ENCODE measurements at regions of chr7 and their contacts with region 1.

Region 1: GRCh38 chr7:89943525-89944050 is 210.7 kb upstream of the STEAP1 start:
- DNase-seq: no peak

Region 2: DNA sequence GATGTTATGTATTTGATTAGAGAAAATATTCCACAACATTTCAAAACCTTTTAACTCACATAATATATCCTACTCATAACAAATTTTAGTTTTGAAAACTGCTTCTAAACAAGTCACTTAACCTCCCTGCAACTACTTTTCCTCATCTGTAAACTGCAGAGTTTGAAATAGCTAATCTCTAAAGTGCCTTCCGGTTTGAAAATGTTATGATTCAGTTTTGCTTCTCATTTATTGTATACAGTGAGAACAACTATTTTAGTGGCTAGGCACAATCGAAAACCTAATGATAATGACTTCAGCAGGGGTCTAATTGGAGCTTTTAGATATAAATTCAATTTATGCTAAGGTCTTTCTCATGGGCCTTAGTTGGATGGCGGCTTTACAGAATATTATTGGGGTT is 1117.4 kb before region 1 on chr7:
- intact Hi-C with region 1: loop called in 1 of 2 experiments (anchors 5 kb)
- DNase-seq: no peak

Region 3: DNA sequence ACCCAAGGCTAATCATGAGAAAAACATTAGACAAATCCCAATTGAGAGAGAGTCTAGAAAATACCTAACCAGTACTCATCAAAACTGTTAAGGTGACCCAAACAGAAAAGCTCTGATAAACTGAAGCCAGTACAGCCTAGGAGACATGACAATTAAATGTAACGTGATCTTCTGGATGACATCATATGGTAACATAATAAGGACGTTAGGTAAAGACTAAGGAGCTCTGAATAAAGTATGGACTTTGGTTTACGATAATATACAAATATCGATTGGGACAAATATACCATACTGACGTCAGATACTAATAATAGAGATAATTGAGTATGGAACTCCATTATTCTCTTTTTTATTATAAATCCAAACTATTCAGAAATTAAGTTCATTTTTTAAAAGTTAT is 350.5 kb before region 1 on chr7:
- intact Hi-C with region 1: no loop called
- DNase-seq: no peak

Measured in posterior vena cava (tissue), 2 donors.